CD4-positive, alpha-beta memory T cell (primary cell): ENCODE measurements at regions of chr19 and their contacts with region 1.

Region 1: GRCh38 chr19:2702162-2703076 is at the start of gene GNG7:
- DNase-seq: peak; percentile 90 to 95 (median 95)
- H3K4me3 ChIP-seq: peak within 1 kb of the TSS in 1 of 2 donors; percentile 45
- H3K4me3 Mint-ChIP-seq: peak within 1 kb of the TSS; percentile 70 to 80 (median 76)
- H3K27ac ChIP-seq: peak within 1 kb of the TSS; percentile 26
- H3K27ac Mint-ChIP-seq: peak within 1 kb of the TSS; percentile 55 to 89 (median 67)
- H3K4me1 ChIP-seq: peaks cover 5% of the 10 kb centered on the region
- H3K4me1 Mint-ChIP-seq: peaks cover 20 to 38% (median 27%) of the 10 kb centered on the region in 4 donors
- H3K27me3 ChIP-seq: no peaks in the 10 kb centered on the region
- H3K27me3 Mint-ChIP-seq: no peaks in the 10 kb centered on the region
- total RNA-seq, gene GNG7: 4.1 to 4.2 TPM

Region 2: DNA sequence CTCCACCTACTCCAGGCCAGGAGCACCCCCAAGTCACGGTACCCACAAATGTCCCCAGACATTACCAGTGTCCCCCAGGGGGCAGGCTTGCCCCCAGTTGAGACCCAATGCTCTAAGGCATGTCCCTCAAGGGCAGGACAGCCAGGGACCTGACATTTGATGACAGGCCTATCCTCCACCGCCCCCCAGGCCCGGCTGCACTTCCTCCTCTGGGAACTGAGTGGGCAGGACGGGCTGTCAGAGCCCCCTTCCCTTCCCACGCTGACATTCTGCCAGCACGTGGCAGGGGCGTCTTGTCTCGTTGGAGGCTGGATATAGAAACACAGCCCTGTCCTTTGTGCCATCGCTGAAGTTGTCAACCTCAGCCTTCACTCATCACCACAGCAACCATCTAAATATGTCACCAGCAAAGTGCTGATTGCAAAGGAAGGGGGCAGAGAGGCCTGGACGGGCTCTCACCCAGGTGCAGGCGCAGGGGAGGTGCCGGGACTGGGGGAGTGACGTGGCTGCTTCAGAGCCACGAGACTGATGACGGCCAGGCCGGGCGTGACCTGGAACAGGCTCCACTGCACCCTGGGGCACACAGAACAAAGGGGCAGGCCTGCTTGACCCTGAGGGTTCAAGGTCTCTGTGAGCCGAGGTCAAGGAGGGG is 38.4 kb before region 1 on chr19:
- CTCF ChIA-PET with region 1: no interaction called
- POLR2A ChIA-PET with region 1: no interaction called
- intact Hi-C with region 1: no loop called
- DNase-seq: no peak
- H3K4me3 ChIP-seq: no peak overlapping the region
- H3K4me3 Mint-ChIP-seq: no peak overlapping the region
- H3K27ac ChIP-seq: no peak overlapping the region
- H3K27ac Mint-ChIP-seq: no peak overlapping the region
- H3K4me1 ChIP-seq: no peaks in the 10 kb centered on the region
- H3K4me1 Mint-ChIP-seq: no peaks in the 10 kb centered on the region
- H3K27me3 ChIP-seq: no peaks in the 10 kb centered on the region
- H3K27me3 Mint-ChIP-seq: peaks cover 0 to 1% of the 10 kb centered on the region in 2 donors

Region 3: GRCh38 chr19:2739602-2740313 is 37.3 kb after region 1 on chr19 and contains the start of gene SLC39A3:
- CTCF ChIA-PET with region 1: no interaction called
- POLR2A ChIA-PET with region 1: no interaction called
- intact Hi-C with region 1: loop called (anchors 1 kb)
- DNase-seq: peak; percentile 97 to 99 (median 98)
- H3K4me3 ChIP-seq: peak within 1 kb of the TSS; percentile 57 to 73
- H3K4me3 Mint-ChIP-seq: peak within 1 kb of the TSS; percentile 80 to 90 (median 87)
- H3K27ac ChIP-seq: peak within 1 kb of the TSS; percentile 52
- H3K27ac Mint-ChIP-seq: peak within 1 kb of the TSS; percentile 29 to 80 (median 75)
- H3K4me1 ChIP-seq: peaks cover 18% of the 10 kb centered on the region
- H3K4me1 Mint-ChIP-seq: peaks cover 12 to 39% (median 17%) of the 10 kb centered on the region in 4 donors
- H3K27me3 ChIP-seq: peaks cover 4% of the 10 kb centered on the region
- H3K27me3 Mint-ChIP-seq: peaks cover 2 to 12% of the 10 kb centered on the region in 2 donors
- total RNA-seq, gene SLC39A3: 18.2 to 19.1 TPM

Region 4: GRCh38 chr19:3671680-3672574 is 969.5 kb after region 1 on chr19:
- CTCF ChIA-PET with region 1: no interaction called
- POLR2A ChIA-PET with region 1: no interaction called
- intact Hi-C with region 1: no loop called
- DNase-seq: peak in 1 of 5 donors; percentile 28
- H3K4me3 ChIP-seq: no peak overlapping the region
- H3K4me3 Mint-ChIP-seq: peak overlapping the region in 3 of 8 donors; percentile 17 to 61 (median 43)
- H3K27ac ChIP-seq: no peak overlapping the region
- H3K27ac Mint-ChIP-seq: peak overlapping the region in 2 of 7 donors; percentile 48 to 51
- H3K4me1 ChIP-seq: peaks cover 13% of the 10 kb centered on the region
- H3K4me1 Mint-ChIP-seq: peaks cover 6 to 28% (median 17%) of the 10 kb centered on the region in 4 donors
- H3K27me3 ChIP-seq: no peaks in the 10 kb centered on the region
- H3K27me3 Mint-ChIP-seq: no peaks in the 10 kb centered on the region